Right ventricle myocardium inferior (tissue), 1 donor: ENCODE measurements at regions of chr2 and their contacts with region 1.

Region 1: DNA sequence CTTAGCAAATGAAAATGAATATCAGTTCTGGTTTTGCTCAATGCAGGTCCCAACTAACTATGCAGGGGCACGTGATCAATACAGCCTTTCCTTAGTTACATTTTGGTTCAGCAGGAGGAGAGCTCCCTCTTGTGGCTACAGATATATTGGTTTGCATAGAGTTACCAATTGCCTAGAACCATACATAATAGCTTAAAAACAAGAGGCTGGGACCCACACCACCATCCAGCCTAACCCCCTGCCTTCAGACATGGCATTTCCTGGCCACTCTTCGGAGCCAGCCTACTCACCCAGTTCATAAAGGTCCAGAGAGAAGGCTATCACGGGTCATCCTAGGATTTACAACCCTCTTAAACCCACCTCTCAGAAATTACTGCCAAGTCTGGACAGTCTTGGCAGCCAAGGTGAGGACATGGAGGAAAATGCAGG is 10.5 kb downstream of the CCDC93 start:
- DNase-seq: no peak
- ATAC-seq: peak; percentile 89

Region 2: DNA sequence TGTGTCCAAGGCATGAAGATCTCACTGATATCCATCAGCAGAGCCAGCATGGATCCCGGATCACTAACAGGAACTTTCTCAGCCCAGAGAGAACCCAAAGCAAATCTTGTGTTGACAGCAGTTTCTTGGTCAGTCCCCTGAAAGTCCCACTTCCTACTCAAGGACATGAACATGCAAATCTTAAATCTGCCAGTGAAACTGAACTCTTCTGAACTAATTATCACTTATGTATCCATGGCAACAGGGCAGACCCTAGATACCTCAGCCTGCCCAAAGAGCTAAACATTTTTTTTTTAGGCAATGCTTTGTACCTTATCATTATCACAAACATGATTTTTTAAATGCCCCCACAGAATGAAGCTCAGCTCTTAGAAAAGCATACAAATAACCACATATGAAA is 316.7 kb before region 1 on chr2:
- intact Hi-C with region 1: no loop called
- DNase-seq: no peak
- ATAC-seq: no peak

Region 3: DNA sequence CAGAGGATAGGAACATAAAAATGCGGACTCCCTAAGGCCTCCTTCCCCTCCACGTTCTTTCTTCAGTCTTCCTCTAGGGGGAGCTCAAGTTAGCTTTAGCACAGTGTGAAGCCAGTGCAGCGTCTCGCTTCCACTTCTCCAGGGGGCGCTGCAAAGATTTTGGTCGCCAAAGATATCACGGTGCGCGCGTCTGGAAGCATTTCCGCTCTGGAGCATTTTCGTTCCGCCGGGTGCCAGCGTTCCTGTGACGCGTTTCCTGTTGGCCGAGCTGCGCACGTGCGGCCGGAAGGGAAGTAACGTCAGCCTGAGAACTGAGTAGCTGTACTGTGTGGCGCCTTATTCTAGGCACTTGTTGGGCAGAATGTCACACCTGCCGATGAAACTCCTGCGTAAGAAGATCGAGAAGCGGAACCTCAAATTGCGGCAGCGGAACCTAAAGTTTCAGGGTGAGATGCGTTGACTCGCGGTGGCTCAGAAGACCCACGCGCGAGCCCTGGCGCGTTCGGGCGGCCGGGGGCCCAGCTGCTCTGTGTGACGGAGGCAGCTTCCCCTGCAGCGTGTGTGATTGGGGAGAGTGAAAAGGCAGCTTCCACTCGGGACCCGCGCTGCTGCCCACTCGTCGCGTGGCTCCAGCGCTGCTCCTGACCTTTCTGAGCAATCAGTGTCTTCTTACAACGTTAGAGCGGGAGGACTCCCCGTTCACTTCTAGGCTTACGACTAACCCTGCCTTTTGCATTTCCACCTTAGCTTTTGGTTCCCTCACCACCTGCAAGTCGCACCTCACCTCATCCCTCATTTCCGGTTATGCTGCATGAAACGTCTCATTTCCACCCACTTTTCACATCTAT is 188.8 kb before region 1 on chr2 and contains the start of gene DDX18:
- intact Hi-C with region 1: loop called (anchors 5 kb)
- DNase-seq: peak; percentile 98
- ATAC-seq: peak; percentile 99
- total RNA-seq, gene DDX18: 27.3 TPM

Region 4: DNA sequence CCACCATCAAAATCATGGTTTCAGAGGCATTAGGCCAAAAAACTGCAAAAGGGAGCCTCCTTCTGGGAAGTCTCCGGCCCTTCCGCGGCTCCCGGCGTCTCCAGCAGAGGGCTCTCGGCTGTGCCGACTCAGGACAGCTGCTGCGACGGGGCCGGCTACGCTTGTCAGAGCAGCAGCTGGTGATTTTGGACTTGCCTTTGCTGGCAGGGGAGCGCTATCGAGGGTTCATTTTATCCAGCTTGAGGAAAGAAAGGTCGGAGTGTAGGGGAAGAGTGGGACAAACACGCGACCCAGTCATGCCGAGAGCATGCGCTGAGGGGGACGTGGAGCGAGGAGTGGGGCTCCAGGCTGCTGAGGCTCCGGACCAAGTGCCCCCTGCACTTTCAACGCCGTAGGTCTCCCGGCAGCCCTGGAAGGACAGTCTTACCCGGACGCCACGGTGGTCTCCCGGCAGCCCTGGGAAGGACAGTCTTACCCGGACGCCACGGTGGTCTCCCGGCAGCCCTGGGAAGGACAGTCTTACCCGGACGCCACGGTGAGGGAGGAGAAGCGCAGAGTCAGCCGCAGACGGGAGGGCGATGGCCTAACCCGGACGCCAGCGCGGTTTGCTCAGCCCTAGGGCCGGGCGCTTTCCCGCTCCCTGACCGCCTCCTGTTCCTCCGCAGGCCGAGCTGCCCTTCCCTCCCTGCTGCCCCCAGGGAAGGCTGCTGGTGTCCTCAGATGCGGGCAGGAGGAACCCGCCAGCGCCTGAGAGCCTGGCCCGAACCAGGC is 167.2 kb before region 1 on chr2:
- intact Hi-C with region 1: loop called (anchors 5 kb)
- DNase-seq: peak; percentile 91
- ATAC-seq: peak; percentile 97